HAP-1 (cell line): ENCODE measurements at regions of chr7 and their contacts with region 1.

Region 1: GRCh38 chr7:93231799-93232672 is at the start of gene VPS50:
- DNase-seq: peak; percentile 94 to 95
- H3K4me3 ChIP-seq: peak within 1 kb of the TSS; percentile 71
- H3K4me1 ChIP-seq: no peaks in the 10 kb centered on the region; the same call in 1 of the 2 replicates
- H3K27me3 ChIP-seq: peaks cover 6% of the 10 kb centered on the region

Region 2: DNA sequence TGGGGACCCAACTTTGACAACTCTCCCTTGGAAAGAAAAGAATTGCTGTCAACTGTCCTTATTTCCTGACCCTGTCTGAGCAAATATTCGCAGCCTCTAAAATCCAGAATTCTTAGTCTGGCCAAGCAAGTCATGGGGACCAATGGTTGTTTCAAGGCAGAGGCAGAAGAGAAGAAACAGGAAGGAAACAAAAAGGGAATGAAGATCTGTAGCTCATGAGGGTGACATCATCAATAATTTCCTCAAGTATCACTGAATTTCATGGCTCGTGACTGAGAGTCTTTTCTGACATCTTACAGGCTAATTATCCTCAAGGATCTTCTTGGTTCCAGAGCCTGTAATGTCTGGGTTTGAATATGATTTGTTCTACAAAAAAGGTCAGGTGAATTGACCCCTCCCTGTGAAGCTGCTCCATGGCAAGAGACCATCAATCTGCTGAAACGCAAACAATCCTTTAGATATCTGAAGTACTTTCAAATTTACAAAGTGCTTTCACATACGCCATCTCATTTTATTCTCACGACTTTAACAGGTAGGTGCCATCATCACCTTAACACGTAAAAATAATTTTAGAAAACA is 401.4 kb before region 1 on chr7:
- in situ Hi-C with region 1: no loop called
- DNase-seq: no peak
- H3K4me3 ChIP-seq: no peak overlapping the region
- H3K4me1 ChIP-seq: peaks cover 53% of the 10 kb centered on the region
- H3K27me3 ChIP-seq: no peaks in the 10 kb centered on the region

Region 3: DNA sequence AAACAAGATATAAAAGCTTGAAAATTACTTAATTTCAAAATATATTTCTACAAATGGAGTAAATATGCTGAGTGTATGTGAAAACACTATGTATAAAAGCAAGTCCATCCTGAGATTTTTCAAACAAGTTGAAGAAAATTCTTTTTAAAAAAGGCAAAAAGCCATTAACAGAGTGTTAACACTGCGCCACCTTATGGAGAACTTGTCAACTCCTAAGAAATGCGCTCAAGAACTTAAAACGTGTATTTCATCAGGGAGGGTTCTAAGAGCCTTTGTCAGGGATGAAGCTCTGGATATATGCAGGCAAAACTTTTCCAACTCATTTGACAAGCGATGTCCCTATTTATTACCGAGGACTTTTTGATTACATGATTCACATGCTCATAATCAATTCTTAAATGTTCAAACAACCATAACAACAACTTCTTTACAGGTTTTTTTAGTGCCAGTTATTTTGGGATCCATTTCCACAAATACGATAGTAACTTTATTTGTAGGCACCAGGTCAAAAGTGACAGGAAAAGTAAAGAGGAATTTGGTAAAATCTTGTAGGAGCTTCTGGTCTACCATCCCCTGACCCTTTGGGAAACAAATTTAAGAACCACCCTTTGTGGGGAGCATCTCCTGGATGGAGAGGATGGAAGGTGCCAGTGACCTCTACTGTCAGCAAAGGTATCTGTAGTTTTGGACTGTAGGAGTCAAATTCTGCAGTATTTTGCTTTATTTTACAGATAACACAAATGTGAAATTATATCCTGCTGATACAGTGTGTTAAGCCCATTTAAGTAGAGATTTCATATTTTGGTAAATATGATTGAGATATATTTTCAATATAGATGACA is 319.2 kb after region 1 on chr7:
- in situ Hi-C with region 1: loop called (anchors 25 kb)
- DNase-seq: peak; percentile 39 to 84
- H3K4me3 ChIP-seq: no peak overlapping the region
- H3K4me1 ChIP-seq: peaks cover 6% of the 10 kb centered on the region
- H3K27me3 ChIP-seq: no peaks in the 10 kb centered on the region